Mammary epithelial cell (primary cell): ENCODE measurements at regions of chr5 and their contacts with region 1.

Region 1: DNA sequence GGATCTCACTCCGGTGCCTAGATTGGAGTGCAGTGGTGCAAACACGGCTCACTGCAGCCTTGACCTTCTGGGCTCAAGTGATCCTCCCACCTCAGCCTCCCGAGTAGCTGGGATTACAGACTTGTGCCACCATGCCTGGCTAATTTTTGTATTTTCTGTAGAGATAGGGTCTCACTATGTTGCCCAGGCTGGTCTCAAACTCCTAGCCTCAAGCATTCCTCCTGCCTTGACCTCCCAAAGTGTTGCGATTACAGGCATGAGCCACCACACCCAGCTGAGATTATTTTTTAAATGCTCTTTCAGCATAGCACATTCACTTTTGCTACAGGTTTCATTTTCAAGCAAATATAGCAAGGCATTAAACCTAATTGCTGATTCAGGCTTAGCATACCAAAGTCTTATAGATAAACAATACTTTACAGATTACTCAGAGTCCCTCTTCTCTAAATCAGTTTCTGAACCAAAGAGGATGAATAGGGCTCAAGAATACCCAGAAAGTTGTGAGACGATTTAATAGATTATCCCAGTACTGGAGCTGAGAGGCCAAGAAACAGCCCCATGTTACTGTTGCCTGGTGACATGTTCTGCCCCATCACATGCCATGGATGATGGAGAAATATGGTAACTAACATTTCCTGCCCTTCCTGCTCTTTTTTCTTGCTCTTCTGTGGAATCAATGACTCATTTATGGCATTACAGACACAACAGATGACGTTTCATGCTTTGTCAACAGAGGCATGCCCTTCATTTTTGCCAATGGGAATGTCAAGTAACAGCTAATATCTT is 18.0 kb upstream of the SSBP2 start:
- DNase-seq: peak; percentile 90
- H3K4me3 ChIP-seq: no peak overlapping the region
- H3K27ac ChIP-seq: peak overlapping the region; percentile 82
- H3K4me1 ChIP-seq: peaks cover 13% of the 10 kb centered on the region
- H3K27me3 ChIP-seq: no peaks in the 10 kb centered on the region
- CTCF ChIP-seq: no peak

Region 2: GRCh38 chr5:81787474-81788242 is 18.8 kb after region 1 on chr5:
- CTCF ChIA-PET with region 1: no interaction called
- dilution Hi-C with region 1: no loop called
- in situ Hi-C with region 1: no loop called
- intact Hi-C with region 1: loop called (anchors 2 kb)
- DNase-seq: peak; percentile 66
- H3K4me3 ChIP-seq: no peak overlapping the region
- H3K27ac ChIP-seq: peak overlapping the region; percentile 43
- H3K4me1 ChIP-seq: peaks cover 41% of the 10 kb centered on the region
- H3K27me3 ChIP-seq: no peaks in the 10 kb centered on the region
- CTCF ChIP-seq: no peak

Region 3: GRCh38 chr5:81924442-81924841 is 155.6 kb after region 1 on chr5:
- CTCF ChIA-PET with region 1: no interaction called
- dilution Hi-C with region 1: no loop called
- in situ Hi-C with region 1: no loop called
- intact Hi-C with region 1: no loop called
- DNase-seq: no peak
- H3K4me3 ChIP-seq: no peak overlapping the region
- H3K27ac ChIP-seq: no peak overlapping the region
- H3K4me1 ChIP-seq: no peaks in the 10 kb centered on the region
- H3K27me3 ChIP-seq: no peaks in the 10 kb centered on the region
- CTCF ChIP-seq: no peak